ENCODE measurements at regions of chr11 and their contacts with region 1.

Region 1: GRCh38 chr11:64652586-64653387 is 61.8 kb downstream of the SLC22A12 start:
- DNase-seq: peak; percentile 45 to 77 (median 61)
- ATAC-seq: peak; percentile 80
- H3K4me3 ChIP-seq: no peak overlapping the region
- H3K4me3 Mint-ChIP-seq: no peak overlapping the region
- H3K27ac ChIP-seq: no peak overlapping the region
- H3K27ac Mint-ChIP-seq: no peak overlapping the region
- H3K4me1 ChIP-seq: no peaks in the 10 kb centered on the region
- H3K4me1 Mint-ChIP-seq: peaks cover 0 to 10% (median 4%) of the 10 kb centered on the region in 7 donors
- H3K27me3 ChIP-seq: no peaks in the 10 kb centered on the region
- H3K27me3 Mint-ChIP-seq: peaks cover 0 to 20% (median 10%) of the 10 kb centered on the region in 5 donors

Region 2: GRCh38 chr11:64358907-64359711 is 293.7 kb before region 1 on chr11 and contains the start of gene RPS6KA4:
- CTCF ChIA-PET with region 1: interaction called, 3 read pairs
- POLR2A ChIA-PET with region 1: no interaction called
- intact Hi-C with region 1: loop called in 1 of 2 experiments (anchors 2 kb)
- DNase-seq: peak in 7 of 9 donors; percentile 25 to 79 (median 36)
- ATAC-seq: peak; percentile 80
- H3K4me3 ChIP-seq: peak within 1 kb of the TSS; percentile 60
- H3K4me3 Mint-ChIP-seq: peak within 1 kb of the TSS; percentile 83 to 100 (median 91)
- H3K27ac ChIP-seq: peak within 1 kb of the TSS; percentile 68
- H3K27ac Mint-ChIP-seq: peak within 1 kb of the TSS; percentile 56 to 94 (median 72)
- H3K4me1 ChIP-seq: peaks cover 10 to 16% of the 10 kb centered on the region in 2 donors
- H3K4me1 Mint-ChIP-seq: peaks cover 16 to 40% (median 30%) of the 10 kb centered on the region in 7 donors
- H3K27me3 ChIP-seq: no peaks in the 10 kb centered on the region
- H3K27me3 Mint-ChIP-seq: no peaks in the 10 kb centered on the region
- total RNA-seq, gene RPS6KA4: 14.2 to 35.7 (median 27.9) TPM

Region 3: DNA sequence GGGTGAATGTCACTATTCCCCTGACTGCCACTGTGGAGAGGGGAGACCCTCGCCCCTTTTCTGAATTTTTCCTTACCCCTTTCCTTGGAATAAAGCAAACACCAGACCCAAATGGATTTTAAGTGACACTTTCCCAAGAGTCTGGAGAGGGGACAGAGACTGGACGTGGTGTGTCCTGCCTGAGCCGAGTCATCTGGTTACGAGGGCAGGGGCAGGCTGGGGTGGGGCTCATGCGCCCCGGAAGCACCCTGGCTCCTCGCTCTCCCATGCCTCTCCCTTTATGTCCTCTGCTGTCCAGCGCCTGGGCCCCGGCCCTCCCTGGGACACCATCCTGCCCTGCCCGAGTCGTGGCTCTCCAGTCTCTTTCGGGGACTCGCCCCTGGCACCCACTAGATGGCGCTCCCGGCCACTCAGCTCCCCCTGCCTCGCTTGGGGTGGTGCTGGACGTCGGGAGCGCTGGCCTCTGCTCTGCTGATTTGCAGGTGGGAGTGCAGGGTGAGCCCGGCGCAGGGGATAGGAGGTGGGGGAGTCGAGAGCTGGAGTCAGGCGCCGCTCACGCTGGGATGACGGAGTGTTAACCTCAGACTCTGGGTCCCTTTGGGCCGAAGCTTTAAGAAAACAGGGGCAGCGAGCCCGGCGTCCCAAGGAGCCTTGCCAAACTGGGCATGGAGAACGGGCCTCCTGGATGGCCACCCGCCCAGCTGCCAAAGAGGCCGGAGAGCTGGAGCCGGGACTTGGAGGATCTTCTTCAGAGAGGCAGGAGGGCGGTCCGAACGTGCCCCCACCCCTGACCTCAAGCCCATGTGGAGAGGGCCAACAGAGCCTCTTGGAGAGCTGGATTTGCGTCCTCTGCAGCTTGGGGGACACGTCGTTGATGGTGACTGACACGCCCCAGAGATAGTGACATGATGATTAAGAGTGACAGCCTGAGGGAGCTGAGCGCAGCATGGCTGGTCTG is 203.9 kb before region 1 on chr11:
- CTCF ChIA-PET with region 1: interaction called, 3 read pairs
- POLR2A ChIA-PET with region 1: no interaction called
- intact Hi-C with region 1: loop called (anchors 1 kb)
- DNase-seq: peak; percentile 32 to 80 (median 58)
- ATAC-seq: peak; percentile 85
- H3K4me3 ChIP-seq: peak overlapping the region; percentile 68
- H3K4me3 Mint-ChIP-seq: peak overlapping the region; percentile 81 to 93 (median 86)
- H3K27ac ChIP-seq: no peak overlapping the region
- H3K27ac Mint-ChIP-seq: peak overlapping the region in 2 of 9 donors; percentile 75 to 76
- H3K4me1 ChIP-seq: peaks cover 15 to 17% of the 10 kb centered on the region in 2 donors
- H3K4me1 Mint-ChIP-seq: peaks cover 12 to 19% (median 17%) of the 10 kb centered on the region in 7 donors
- H3K27me3 ChIP-seq: peaks cover 0 to 6% of the 10 kb centered on the region in 2 donors
- H3K27me3 Mint-ChIP-seq: peaks cover 0 to 34% (median 15%) of the 10 kb centered on the region in 5 donors

Region 4: DNA sequence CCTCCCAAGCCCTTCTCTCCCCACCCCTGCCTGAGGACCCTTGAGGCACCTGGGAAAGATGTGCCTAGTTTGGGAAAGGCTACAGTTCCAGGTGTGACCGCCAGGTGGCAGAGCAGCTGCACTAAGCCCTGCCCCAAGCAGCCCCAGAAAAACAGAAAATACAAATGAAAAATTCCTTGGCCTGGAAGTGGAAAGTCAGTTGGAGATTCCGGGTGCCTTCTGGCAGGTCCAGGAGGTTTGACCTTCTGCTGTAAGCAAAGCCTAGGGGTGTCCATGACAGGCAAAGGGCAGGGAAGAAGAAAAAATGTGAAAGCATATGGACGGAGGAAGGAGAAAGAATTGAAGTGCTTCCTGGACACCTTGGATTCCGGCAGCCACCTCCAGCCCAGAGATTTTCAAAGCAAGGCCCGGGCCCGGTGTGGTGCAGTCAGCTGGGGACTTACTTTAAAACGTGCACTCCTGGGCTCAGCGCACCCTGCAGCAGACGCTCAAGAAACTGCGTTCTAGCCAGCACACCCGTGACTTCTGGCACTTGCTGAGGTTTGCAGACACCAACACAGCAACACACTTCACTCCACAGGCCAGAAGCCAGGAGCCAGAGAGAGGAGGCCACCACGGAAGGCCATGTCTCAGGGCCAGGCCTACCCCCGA is 99.1 kb before region 1 on chr11:
- CTCF ChIA-PET with region 1: interaction called, 4 read pairs
- POLR2A ChIA-PET with region 1: no interaction called
- intact Hi-C with region 1: loop called in 1 of 2 experiments (anchors 1 kb)
- DNase-seq: peak; percentile 13 to 63 (median 37)
- ATAC-seq: peak; percentile 72
- H3K4me3 ChIP-seq: no peak overlapping the region
- H3K4me3 Mint-ChIP-seq: no peak overlapping the region
- H3K27ac ChIP-seq: no peak overlapping the region
- H3K27ac Mint-ChIP-seq: peak overlapping the region in 1 of 9 donors; percentile 64
- H3K4me1 ChIP-seq: no peaks in the 10 kb centered on the region
- H3K4me1 Mint-ChIP-seq: peaks cover 0 to 7% (median 0%) of the 10 kb centered on the region in 7 donors
- H3K27me3 ChIP-seq: no peaks in the 10 kb centered on the region
- H3K27me3 Mint-ChIP-seq: peaks cover 0 to 4% (median 0%) of the 10 kb centered on the region in 5 donors

Region 5: GRCh38 chr11:65016697-65017096 is 363.9 kb after region 1 on chr11:
- CTCF ChIA-PET with region 1: no interaction called
- POLR2A ChIA-PET with region 1: no interaction called
- intact Hi-C with region 1: no loop called
- DNase-seq: no peak
- ATAC-seq: no peak
- H3K4me3 ChIP-seq: no peak overlapping the region
- H3K4me3 Mint-ChIP-seq: peak overlapping the region in 2 of 10 donors; percentile 38 to 39
- H3K27ac ChIP-seq: no peak overlapping the region
- H3K27ac Mint-ChIP-seq: peak overlapping the region in 2 of 9 donors; percentile 20 to 80
- H3K4me1 ChIP-seq: peaks cover 4 to 9% of the 10 kb centered on the region in 2 donors
- H3K4me1 Mint-ChIP-seq: peaks cover 15 to 33% (median 29%) of the 10 kb centered on the region in 7 donors
- H3K27me3 ChIP-seq: no peaks in the 10 kb centered on the region
- H3K27me3 Mint-ChIP-seq: no peaks in the 10 kb centered on the region

Measured in naive thymus-derived CD4-positive, alpha-beta T cell (primary cell).